ENCODE measurements at regions of chr1 and their contacts with region 1.

Region 1: DNA sequence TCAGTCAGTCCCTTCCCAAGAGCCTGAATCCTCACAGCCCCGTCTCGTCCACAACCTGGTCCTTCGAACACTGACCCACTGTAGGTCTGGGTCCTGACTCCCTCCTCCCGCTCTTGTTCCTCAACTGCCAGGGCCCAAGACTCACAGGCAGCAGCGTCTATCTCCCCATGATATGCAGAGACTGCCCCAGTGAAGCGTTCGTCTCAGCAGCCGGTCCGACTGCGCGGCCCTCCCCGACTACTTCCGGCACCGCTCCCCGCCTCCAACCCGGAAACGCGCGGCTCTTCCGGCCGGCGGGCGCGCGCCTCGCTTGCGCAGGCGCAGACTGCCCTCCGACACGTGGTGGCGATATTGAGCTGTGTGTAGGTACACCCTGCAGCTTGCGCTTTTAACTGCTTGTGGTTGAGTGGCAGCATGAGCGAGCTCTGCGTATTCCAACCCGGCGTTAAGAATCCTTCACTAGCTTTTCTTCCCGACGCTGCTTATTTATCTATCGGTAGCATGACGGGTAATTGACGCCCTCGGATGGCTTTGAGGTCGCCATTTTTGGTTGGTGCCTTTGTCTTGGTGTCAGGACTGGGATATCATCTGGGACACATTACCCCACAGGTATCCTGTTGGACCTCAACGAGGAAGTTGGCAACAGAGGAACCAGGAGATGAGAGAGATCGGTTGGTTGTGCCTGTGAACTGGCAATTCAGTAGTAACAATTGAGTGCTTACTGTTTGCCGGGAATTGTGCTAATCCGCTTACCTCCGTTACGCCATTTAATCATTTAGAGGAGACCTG is at the start of gene TAF12:
- DNase-seq: peak; percentile 67 to 95
- H3K4me3 ChIP-seq: peak within 1 kb of the TSS; percentile 67 to 76
- H3K27ac ChIP-seq: peak within 1 kb of the TSS; percentile 92
- H3K4me1 ChIP-seq: peaks cover 3 to 25% of the 10 kb centered on the region in 2 donors
- H3K27me3 ChIP-seq: no peaks in the 10 kb centered on the region
- CTCF ChIP-seq: peak; percentile 1 to 50 (median 32)
- total RNA-seq, gene TAF12: 32.2 TPM

Region 2: GRCh38 chr1:28235755-28236655 is 407.0 kb before region 1 on chr1 and contains the start of gene ATP5IF1:
- intact Hi-C with region 1: loop called (anchors 10 kb)
- DNase-seq: peak; percentile 95 to 99
- H3K4me3 ChIP-seq: peak within 1 kb of the TSS; percentile 80 to 86
- H3K27ac ChIP-seq: peak within 1 kb of the TSS; percentile 83 to 85
- H3K4me1 ChIP-seq: peaks cover 7 to 28% of the 10 kb centered on the region in 2 donors
- H3K27me3 ChIP-seq: no peaks in the 10 kb centered on the region
- CTCF ChIP-seq: peak in 1 of 3 experiments; percentile 8
- total RNA-seq, gene ATP5IF1: 220 TPM

Region 3: GRCh38 chr1:28437934-28438699 is 204.9 kb before region 1 on chr1:
- intact Hi-C with region 1: no loop called
- DNase-seq: peak; percentile 59 to 93
- H3K4me3 ChIP-seq: peak overlapping the region; percentile 29 to 48
- H3K27ac ChIP-seq: peak overlapping the region; percentile 81 to 85
- H3K4me1 ChIP-seq: peaks cover 11% of the 10 kb centered on the region in 2 donors
- H3K27me3 ChIP-seq: no peaks in the 10 kb centered on the region
- CTCF ChIP-seq: no peak

Region 4: GRCh38 chr1:28552758-28553663 is 90.0 kb before region 1 on chr1 and contains the start of gene TRNAU1AP:
- intact Hi-C with region 1: loop called (anchors 2 kb)
- DNase-seq: peak; percentile 83 to 97
- H3K4me3 ChIP-seq: peak within 1 kb of the TSS; percentile 64 to 90
- H3K27ac ChIP-seq: peak within 1 kb of the TSS; percentile 77 to 85
- H3K4me1 ChIP-seq: peaks cover 0 to 10% of the 10 kb centered on the region in 2 donors
- H3K27me3 ChIP-seq: no peaks in the 10 kb centered on the region
- CTCF ChIP-seq: no peak
- total RNA-seq, gene TRNAU1AP: 11.0 TPM

Region 5: DNA sequence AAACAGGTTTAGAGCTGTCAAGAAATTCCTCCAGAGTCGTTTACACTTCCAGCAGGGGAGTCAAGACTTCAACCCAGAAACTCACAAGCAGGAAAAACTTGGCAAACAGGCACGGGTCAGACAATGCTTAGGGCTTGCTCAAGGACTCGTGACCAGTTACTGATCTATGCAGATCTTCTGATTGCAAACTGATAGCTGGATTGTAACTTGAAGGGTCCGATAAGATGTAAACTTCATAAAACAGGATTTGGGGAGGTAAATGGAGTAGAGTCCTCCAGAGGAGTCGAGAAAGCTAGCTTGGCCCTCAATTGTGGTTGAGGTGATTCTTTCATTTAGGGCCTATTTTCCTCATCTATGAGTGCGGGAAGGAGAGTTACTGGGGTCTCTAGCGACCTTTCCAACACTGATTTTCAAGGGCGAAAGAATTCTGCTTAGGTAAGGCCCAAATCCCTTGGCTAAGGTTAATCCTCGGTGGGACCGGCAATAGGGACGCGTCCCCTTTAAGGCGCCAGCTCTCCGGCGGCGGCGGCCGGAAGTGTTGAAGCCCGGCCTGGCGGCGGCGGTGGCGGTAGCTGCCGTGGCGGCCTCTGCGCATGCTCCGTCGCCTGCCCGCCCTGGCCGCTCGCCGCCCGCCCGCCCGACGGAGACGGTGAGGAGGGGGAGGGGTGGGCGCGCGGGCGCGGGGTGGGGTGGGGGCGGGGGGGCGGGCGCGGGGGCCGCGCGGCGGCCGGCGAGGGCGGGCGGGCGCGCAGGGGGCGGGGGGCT is 25.3 kb after region 1 on chr1 and contains the start of gene GMEB1:
- intact Hi-C with region 1: loop called (anchors 1 kb)
- DNase-seq: peak; percentile 39 to 90
- H3K4me3 ChIP-seq: peak within 1 kb of the TSS; percentile 71 to 75
- H3K27ac ChIP-seq: peak within 1 kb of the TSS; percentile 94 to 100
- H3K4me1 ChIP-seq: peaks cover 0 to 12% of the 10 kb centered on the region in 2 donors
- H3K27me3 ChIP-seq: no peaks in the 10 kb centered on the region
- CTCF ChIP-seq: no peak
- total RNA-seq, gene GMEB1: 5.2 TPM

Region 6: DNA sequence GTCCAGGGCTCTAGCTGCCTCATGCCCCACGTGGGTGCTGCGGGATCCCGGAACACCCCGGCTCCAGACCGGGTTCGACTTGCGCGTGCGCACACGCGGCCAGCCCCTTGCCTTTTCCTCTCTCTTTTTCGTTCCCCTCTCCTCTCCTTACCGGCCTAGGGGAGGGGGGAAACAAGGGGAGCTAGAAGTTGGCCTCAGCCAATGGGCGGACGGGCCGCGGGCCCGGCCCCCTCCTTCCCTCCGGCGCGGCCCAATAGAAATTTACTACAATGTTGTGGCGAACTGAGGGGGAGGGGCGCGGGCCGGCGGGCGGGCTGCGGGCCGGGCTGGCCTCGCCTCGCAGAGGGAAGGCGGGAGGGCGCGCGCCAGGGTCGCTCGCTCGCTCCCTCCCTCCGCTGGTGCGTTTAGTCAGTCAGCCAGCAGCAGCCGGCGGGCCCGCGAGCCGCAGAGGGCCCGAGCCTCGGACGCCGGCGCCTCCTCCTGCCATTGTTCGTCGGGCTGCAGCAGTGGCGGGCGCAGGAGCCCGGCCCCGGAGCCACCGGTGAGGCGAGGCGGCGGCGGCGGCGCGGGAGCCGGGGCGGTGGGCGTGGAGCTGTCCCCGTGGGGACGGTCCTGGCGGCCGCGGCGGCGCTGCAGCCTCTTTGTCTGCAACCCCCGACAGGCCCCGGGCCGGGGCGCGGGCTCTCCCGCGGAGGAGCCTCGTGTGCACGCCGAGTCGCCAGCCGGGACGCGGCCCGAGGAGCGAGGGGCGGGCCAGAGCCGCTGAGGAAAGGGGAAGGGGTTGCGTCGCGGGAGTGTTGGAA is 271.4 kb after region 1 on chr1 and contains the start of gene EPB41:
- intact Hi-C with region 1: loop called (anchors 10 kb)
- DNase-seq: peak; percentile 58 to 94
- H3K4me3 ChIP-seq: peak within 1 kb of the TSS; percentile 53 to 84
- H3K27ac ChIP-seq: peak within 1 kb of the TSS; percentile 44 to 63
- H3K4me1 ChIP-seq: peaks cover 0 to 4% of the 10 kb centered on the region in 2 donors
- H3K27me3 ChIP-seq: no peaks in the 10 kb centered on the region
- CTCF ChIP-seq: no peak
- total RNA-seq, gene EPB41: 47.6 TPM